ENCODE measurements at regions of chr4 and their contacts with region 1.

Region 1: GRCh38 chr4:128725405-128726055 is 84.0 kb upstream of the JADE1 start:
- DNase-seq: no peak
- H3K4me3 ChIP-seq: no peak overlapping the region
- H3K27ac ChIP-seq: no peak overlapping the region
- H3K4me1 ChIP-seq: no peaks in the 10 kb centered on the region
- H3K27me3 ChIP-seq: no peaks in the 10 kb centered on the region
- CTCF ChIP-seq: no peak
- POLR2A ChIP-seq: no peak

Region 2: DNA sequence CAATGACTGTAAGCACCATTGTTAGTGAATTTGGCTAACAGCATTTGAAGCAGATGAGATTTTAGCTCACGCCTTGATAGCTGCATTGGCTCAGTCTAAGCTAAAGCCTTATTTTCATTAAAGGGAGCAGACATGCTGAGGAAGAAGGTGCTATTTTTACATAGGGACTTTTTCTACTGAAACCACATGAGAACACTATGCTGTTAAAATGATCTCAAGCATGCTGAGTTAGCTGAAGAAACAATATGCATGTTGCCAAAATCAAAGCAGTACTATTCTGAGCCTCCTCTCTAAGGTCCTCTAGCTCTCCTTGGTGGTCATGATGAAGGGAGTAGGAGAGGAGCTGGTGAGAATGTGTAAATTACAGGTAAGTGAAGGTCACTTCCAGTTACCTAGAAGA is 50.4 kb before region 1 on chr4:
- intact Hi-C with region 1: loop called (anchors 2 kb)
- DNase-seq: no peak
- H3K4me3 ChIP-seq: no peak overlapping the region
- H3K27ac ChIP-seq: no peak overlapping the region
- H3K4me1 ChIP-seq: no peaks in the 10 kb centered on the region
- H3K27me3 ChIP-seq: no peaks in the 10 kb centered on the region
- CTCF ChIP-seq: no peak
- POLR2A ChIP-seq: no peak

Region 3: GRCh38 chr4:128688846-128689467 is 36.6 kb before region 1 on chr4:
- intact Hi-C with region 1: no loop called
- DNase-seq: no peak
- H3K4me3 ChIP-seq: no peak overlapping the region
- H3K27ac ChIP-seq: no peak overlapping the region
- H3K4me1 ChIP-seq: no peaks in the 10 kb centered on the region
- H3K27me3 ChIP-seq: no peaks in the 10 kb centered on the region
- CTCF ChIP-seq: no peak
- POLR2A ChIP-seq: no peak

Region 4: GRCh38 chr4:128768373-128768996 is 43.0 kb after region 1 on chr4:
- intact Hi-C with region 1: no loop called
- DNase-seq: no peak
- H3K4me3 ChIP-seq: no peak overlapping the region
- H3K27ac ChIP-seq: no peak overlapping the region
- H3K4me1 ChIP-seq: no peaks in the 10 kb centered on the region
- H3K27me3 ChIP-seq: no peaks in the 10 kb centered on the region
- CTCF ChIP-seq: no peak
- POLR2A ChIP-seq: no peak